ENCODE measurements at regions of chr9 and their contacts with region 1.

Region 1: GRCh38 chr9:128552153-128552743 is at the start of gene SPTAN1:
- DNase-seq: peak; percentile 98
- ATAC-seq: peak; percentile 78
- H3K4me3 Mint-ChIP-seq: no peak within 1 kb of the TSS
- H3K27ac Mint-ChIP-seq: peak within 1 kb of the TSS; percentile 97
- H3K4me1 Mint-ChIP-seq: peaks cover 34% of the 10 kb centered on the region
- H3K27me3 Mint-ChIP-seq: no peaks in the 10 kb centered on the region
- total RNA-seq, gene SPTAN1: 192 to 269 TPM

Region 2: GRCh38 chr9:127770905-127771569 is 781.2 kb before region 1 on chr9:
- CTCF ChIA-PET with region 1: no interaction called
- POLR2A ChIA-PET with region 1: no interaction called
- intact Hi-C with region 1: no loop called
- DNase-seq: peak; percentile 99
- ATAC-seq: peak; percentile 95
- H3K4me3 Mint-ChIP-seq: peak overlapping the region; percentile 80
- H3K27ac Mint-ChIP-seq: peak overlapping the region; percentile 80
- H3K4me1 Mint-ChIP-seq: peaks cover 59% of the 10 kb centered on the region
- H3K27me3 Mint-ChIP-seq: no peaks in the 10 kb centered on the region

Region 3: DNA sequence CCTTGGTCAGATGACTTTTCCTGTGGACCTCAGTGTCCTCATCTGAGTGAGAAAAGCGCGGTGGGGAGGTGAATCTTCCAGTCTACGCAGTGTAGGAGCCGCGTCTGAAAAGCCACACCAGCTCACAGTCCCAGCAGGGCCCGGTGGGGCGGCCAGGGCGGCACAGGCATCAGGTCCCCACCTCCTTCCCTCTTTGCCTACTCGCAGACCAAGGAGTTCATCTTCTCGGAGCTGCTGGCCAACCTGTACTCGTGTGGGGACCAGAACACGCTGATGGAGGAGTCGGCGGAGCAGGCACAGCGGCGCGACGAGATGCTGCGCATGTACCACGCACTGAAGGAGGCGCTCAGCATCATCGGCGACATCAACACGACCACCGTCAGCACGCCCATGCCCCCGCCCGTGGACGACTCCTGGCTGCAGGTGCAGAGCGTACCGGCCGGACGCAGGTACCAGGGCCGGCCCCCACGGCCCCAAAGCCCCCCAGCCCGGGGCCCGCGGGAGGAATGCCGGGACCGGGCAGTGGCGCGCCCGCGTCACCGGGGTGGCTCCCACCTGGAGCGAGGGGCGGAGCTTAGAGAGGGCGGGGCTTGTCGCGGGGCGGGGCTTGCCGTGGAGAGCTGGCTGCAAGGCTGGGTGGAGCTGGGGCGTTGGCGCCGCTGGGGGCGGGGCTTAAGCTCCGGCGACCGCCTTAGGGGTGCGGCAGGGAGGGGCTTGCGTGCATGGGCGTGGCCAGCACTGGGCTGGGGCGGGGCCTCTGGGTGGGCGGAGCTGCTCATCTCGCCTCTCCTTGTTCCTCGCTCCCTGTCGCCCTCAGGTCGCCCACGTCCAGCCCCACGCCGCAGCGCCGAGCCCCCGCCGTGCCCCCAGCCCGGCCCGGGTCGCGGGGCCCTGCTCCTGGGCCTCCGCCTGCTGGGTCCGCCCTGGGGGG is 302.1 kb before region 1 on chr9:
- CTCF ChIA-PET with region 1: no interaction called
- POLR2A ChIA-PET with region 1: no interaction called
- intact Hi-C with region 1: loop called in 1 of 2 experiments (anchors 1 kb)
- DNase-seq: peak; percentile 99
- ATAC-seq: peak; percentile 98
- H3K4me3 Mint-ChIP-seq: peak overlapping the region; percentile 78
- H3K27ac Mint-ChIP-seq: peak overlapping the region; percentile 42
- H3K4me1 Mint-ChIP-seq: peaks cover 7% of the 10 kb centered on the region
- H3K27me3 Mint-ChIP-seq: peaks cover 10% of the 10 kb centered on the region

Region 4: DNA sequence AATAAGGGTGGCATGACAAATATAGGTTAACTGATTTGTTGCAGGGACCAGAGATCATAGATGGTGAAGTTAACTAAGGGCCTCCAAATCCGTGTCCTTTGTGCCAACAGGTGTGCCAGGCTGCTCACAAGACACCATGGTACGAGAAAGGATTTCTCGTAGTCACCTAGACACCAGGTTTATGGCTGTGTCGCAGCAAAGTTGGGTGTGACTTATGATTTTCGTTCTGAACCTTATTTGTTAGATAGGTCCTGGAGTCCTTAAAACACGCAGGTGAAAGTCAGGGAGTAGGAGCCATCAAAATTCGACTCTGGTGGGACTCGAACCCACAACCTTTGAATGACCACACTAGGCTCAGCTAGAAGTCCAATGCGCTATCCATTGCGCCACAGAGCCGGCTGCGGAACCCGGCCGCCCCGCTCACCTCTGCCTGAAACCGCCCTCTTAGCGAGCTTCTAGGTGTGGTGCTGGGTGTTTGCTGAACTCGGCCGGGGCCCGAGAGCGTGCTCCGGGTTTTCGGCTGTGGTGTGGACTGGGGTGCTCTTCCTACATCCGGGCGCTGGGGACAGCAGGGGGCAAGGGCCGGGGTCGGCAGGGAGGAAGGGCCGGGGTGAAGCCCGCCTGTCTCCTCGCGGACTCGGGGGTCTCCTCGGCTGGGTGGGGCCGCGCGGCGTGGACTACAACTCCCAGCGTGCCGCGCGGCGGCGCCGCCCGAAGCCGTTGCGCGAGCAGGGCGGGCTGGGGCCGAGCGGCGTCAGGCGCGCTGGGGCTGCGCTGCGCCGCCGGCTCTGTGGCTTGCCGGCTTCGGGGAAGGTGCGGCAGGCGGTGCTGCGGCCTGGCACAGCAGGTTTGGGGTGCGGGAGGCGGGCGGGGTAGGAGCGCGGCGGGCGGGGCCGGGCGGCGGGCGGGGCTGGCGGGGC is 212.2 kb before region 1 on chr9 and contains the start of gene SLC27A4:
- CTCF ChIA-PET with region 1: interaction called, 4 read pairs
- POLR2A ChIA-PET with region 1: no interaction called
- intact Hi-C with region 1: loop called in 1 of 2 experiments (anchors 1 kb)
- DNase-seq: peak; percentile 88
- ATAC-seq: peak; percentile 93
- H3K4me3 Mint-ChIP-seq: peak within 1 kb of the TSS; percentile 88
- H3K27ac Mint-ChIP-seq: peak within 1 kb of the TSS; percentile 83
- H3K4me1 Mint-ChIP-seq: peaks cover 6% of the 10 kb centered on the region
- H3K27me3 Mint-ChIP-seq: no peaks in the 10 kb centered on the region
- total RNA-seq, gene SLC27A4: 8.4 to 10.2 TPM

Region 5: DNA sequence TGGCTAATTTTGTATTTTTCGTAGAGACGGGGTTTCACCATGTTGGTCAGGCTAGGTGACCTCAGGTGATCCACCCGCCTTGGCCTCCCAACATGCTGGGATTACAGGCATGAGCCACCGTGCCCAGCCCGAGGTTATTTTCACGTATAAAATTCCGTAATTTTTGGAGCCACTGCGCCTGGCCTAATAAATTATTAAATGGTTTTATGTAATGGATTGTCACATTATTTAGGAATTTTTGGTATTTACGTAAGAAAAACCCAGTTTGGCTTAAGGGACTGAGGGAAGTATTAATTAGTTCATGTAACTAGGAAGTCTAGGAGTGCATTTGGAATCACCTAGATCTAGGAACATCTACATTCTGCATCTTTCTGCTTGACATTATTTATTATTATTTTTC is 39.4 kb before region 1 on chr9:
- CTCF ChIA-PET with region 1: no interaction called
- POLR2A ChIA-PET with region 1: no interaction called
- intact Hi-C with region 1: no loop called
- DNase-seq: no peak
- ATAC-seq: no peak
- H3K4me3 Mint-ChIP-seq: no peak overlapping the region
- H3K27ac Mint-ChIP-seq: no peak overlapping the region
- H3K4me1 Mint-ChIP-seq: peaks cover 10% of the 10 kb centered on the region
- H3K27me3 Mint-ChIP-seq: no peaks in the 10 kb centered on the region

Region 6: GRCh38 chr9:128621730-128622455 is 69.6 kb after region 1 on chr9:
- CTCF ChIA-PET with region 1: no interaction called
- POLR2A ChIA-PET with region 1: no interaction called
- intact Hi-C with region 1: no loop called
- DNase-seq: no peak
- ATAC-seq: no peak
- H3K4me3 Mint-ChIP-seq: no peak overlapping the region
- H3K27ac Mint-ChIP-seq: no peak overlapping the region
- H3K4me1 Mint-ChIP-seq: no peaks in the 10 kb centered on the region
- H3K27me3 Mint-ChIP-seq: no peaks in the 10 kb centered on the region

Region 7: GRCh38 chr9:128656416-128657343 is 104.4 kb after region 1 on chr9 and contains the start of gene DYNC2I2:
- CTCF ChIA-PET with region 1: no interaction called
- POLR2A ChIA-PET with region 1: no interaction called
- intact Hi-C with region 1: loop called in 1 of 2 experiments (anchors 1 kb)
- DNase-seq: peak; percentile 99
- ATAC-seq: peak; percentile 98
- H3K4me3 Mint-ChIP-seq: peak within 1 kb of the TSS; percentile 82
- H3K27ac Mint-ChIP-seq: peak within 1 kb of the TSS; percentile 100
- H3K4me1 Mint-ChIP-seq: peaks cover 6% of the 10 kb centered on the region
- H3K27me3 Mint-ChIP-seq: no peaks in the 10 kb centered on the region
- total RNA-seq, gene DYNC2I2: 26.7 to 35.7 TPM

Region 8: DNA sequence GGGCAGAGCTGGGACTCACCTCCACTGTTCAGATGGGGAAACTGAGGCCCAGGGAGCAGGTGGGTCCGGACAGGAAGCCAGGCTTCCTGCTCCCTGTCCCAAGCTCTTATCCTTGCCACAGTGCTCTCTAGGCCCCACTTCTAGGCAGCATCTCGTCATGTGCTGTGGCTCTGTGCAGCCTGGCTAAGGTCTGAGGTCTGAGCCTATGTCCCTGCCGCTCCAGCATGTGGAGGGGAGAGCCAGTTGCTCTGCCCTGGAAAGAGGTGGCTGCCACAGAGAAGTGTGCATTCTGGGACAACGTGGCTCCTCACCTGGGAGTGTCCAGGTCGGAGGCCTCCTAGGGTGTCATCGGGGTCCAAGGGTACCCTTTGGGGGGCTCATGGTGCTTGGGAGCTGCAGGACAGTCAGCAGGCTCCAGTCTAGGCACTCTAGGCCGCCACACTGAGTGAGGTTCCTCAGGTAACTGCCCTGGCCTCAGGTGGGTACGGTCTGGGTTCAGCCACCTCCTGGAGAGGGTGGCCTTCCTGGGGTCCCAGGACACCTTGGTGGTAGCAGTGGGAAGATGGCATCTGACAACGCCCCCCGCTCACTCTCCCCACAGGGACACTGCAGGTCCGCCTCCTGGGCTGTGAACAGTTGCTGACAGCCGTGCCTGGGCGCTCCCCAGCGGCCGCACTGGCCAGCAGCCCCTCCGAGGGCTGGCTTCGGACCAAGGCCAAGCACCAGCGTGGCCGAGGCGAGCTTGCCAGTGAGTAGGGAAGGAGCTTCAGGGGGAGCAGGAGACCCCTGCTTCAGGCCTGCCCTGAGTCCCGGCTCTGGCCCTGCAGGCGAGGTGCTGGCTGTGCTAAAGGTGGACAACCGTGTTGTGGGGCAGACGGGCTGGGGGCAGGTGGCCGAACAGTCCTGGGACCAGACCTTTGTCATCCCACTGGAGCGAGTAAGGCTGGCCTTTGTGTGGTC is 160.5 kb after region 1 on chr9:
- CTCF ChIA-PET with region 1: no interaction called
- POLR2A ChIA-PET with region 1: no interaction called
- intact Hi-C with region 1: no loop called
- DNase-seq: no peak
- ATAC-seq: no peak
- H3K4me3 Mint-ChIP-seq: no peak overlapping the region
- H3K27ac Mint-ChIP-seq: no peak overlapping the region
- H3K4me1 Mint-ChIP-seq: no peaks in the 10 kb centered on the region
- H3K27me3 Mint-ChIP-seq: no peaks in the 10 kb centered on the region

Region 9: DNA sequence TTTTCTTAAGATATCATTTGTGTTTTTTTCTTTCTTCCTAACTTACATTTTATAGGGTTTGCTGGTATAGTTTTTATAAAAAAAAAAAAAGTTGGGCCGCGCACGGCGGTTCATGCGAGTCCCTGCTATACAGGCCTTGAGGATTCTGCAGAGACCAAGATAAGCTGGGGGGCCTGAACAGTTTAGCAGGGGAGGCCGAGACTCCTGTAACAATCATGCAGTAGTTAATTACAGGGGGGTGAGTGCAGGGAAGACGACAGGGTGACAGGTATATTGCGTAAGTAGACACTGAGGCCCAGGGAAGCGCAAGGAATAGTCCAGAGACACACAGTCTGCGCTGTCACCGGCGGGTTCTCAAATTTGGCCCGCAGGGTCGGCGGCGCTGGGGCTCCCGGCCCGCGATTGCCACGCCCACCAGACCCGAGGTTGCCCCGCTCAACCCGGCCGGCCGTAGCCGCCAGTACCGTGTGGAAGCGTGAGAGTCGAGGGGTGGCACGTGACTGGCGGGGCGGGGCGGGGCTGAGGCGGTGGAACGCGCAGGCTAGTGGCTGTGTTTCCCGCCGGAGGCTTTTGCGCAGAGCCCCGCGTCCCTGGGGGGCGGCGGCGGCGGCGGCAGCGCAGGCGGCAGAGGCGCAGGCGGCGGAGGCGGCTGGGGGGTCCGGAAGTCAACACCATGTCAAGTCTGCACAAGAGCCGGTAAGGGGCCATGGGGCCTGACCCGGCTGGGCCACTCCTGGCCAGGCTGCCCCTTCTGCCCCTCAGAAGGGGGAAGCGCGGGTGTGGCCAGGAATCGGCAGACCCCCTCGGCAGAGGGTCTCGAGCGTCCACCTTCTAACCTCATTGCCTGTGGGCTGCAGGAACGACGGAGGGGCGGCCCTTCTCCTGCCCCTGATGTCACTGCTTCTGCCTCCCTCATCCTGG is 234.7 kb after region 1 on chr9 and contains the start of gene TBC1D13:
- CTCF ChIA-PET with region 1: interaction called, 4 read pairs
- POLR2A ChIA-PET with region 1: no interaction called
- intact Hi-C with region 1: loop called in 1 of 2 experiments (anchors 5 kb)
- DNase-seq: peak; percentile 94
- ATAC-seq: peak; percentile 97
- H3K4me3 Mint-ChIP-seq: peak within 1 kb of the TSS; percentile 87
- H3K27ac Mint-ChIP-seq: peak within 1 kb of the TSS; percentile 87
- H3K4me1 Mint-ChIP-seq: peaks cover 18% of the 10 kb centered on the region
- H3K27me3 Mint-ChIP-seq: no peaks in the 10 kb centered on the region
- total RNA-seq, gene TBC1D13: 10.5 to 14.0 TPM

Region 10: DNA sequence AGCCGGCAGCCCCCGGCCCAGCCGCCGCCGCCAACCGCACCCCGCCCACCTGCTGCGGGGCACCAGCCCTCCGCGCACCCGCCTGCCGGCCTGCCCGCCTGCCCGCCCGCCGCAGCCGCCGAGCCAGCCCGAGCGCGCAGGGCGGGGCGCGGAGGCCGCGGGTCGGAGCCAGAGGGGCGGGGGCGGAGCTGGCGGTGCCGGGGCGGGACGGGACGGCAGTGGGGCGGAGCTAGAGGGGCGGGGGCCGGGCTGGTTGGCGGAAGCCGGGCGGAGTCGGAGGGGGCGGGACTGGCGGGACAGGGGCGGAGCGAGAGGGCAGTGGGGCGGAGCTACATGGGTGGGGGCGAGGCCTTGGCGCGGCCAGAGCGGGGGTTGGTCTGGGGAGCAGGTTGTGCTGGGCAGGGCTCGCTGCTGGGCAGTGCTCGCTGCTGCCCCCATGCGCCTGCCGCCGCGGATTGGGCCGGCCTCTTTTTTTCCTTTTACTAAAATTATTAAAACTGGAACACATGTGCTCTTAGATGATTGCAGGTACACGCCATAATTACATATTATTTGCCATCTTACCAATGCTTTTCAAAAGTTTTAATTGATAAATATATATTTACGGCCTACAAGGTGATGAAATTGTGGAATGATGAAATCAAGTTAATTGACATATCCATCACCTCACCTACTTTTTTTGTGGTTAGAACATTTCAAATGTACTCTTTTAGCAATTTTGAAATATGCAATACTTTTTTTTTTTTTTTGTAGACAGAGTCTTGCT is 476.1 kb after region 1 on chr9 and contains the start of gene SH3GLB2:
- CTCF ChIA-PET with region 1: no interaction called
- POLR2A ChIA-PET with region 1: interaction called, 4 read pairs
- intact Hi-C with region 1: loop called in 1 of 2 experiments (anchors 1 kb)
- DNase-seq: peak; percentile 98
- ATAC-seq: peak; percentile 93
- H3K4me3 Mint-ChIP-seq: peak within 1 kb of the TSS; percentile 81
- H3K27ac Mint-ChIP-seq: peak within 1 kb of the TSS; percentile 52
- H3K4me1 Mint-ChIP-seq: peaks cover 17% of the 10 kb centered on the region
- H3K27me3 Mint-ChIP-seq: no peaks in the 10 kb centered on the region
- total RNA-seq, gene SH3GLB2: 49.1 to 53.7 TPM

Measured in activated CD4-positive, alpha-beta T cell treated with anti-CD3 and anti-CD28 coated beads for 36 hours (primary cell).